Breast epithelium (tissue), 4 donors: ENCODE measurements at regions of chr16 and their contacts with region 1.

Region 1: GRCh38 chr16:27253526-27253930 is 15.0 kb downstream of the NSMCE1 start:
- DNase-seq: no peak
- H3K4me3 ChIP-seq: no peak overlapping the region
- H3K27ac ChIP-seq: peak overlapping the region; percentile 38 to 86
- H3K4me1 ChIP-seq: peaks cover 2 to 9% of the 10 kb centered on the region in 2 donors
- H3K27me3 ChIP-seq: no peaks in the 10 kb centered on the region
- CTCF ChIP-seq: no peak
- POLR2A ChIP-seq: no peak

Region 2: GRCh38 chr16:27235055-27235937 is 18.2 kb before region 1 on chr16:
- intact Hi-C with region 1: no loop called
- DNase-seq: peak; percentile 80 to 81
- H3K4me3 ChIP-seq: peak overlapping the region in 2 of 3 donors; percentile 1 to 34
- H3K27ac ChIP-seq: peak overlapping the region; percentile 78 to 88
- H3K4me1 ChIP-seq: peaks cover 7% of the 10 kb centered on the region in 2 donors
- H3K27me3 ChIP-seq: no peaks in the 10 kb centered on the region
- CTCF ChIP-seq: peak; percentile 28 to 77 (median 73)
- POLR2A ChIP-seq: no peak

Region 3: DNA sequence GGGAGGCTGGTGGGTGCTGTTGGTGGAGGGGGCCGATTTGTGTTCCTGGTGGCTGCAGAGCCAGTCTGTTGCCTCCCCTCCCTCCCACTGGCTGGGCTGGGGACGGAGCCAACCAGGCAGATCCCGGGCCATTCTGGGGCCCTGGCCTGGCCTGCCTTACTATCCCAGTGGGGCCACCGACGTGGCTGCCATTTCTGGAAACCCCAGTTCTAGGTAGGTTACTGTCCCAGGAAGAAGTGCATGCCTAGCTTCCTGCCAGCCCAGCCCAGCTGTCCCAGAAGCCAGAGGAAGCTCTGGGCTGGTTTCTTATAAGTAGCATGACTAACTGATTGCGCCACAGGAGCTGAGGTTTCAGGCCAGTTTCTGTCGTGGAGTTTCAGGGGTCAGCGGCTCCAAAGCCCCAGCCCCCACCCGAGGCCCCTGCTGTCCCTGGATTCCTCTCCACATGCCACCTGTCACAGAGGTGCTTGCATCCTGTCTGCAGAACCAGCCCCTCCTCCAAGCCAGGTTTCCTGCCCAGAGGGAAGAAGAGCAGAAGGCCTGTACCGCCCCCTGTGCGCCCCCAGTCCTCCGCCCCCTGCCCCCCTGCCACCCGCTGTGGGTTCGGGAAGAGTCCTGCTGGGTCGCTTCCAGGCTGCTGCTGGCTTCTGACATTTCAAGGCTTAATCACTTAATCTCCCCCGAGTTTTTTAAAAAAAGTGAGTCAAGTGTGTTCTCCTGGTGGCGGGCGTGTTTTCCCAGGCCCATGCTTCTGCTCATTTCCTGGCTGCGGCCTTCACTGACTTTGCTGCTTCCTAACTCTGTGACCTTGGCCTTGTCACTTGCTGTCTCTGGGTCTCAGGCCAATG is 73.4 kb after region 1 on chr16:
- intact Hi-C with region 1: loop called (anchors 10 kb)
- DNase-seq: peak; percentile 54 to 91
- H3K4me3 ChIP-seq: peak overlapping the region in 2 of 3 donors; percentile 8 to 42
- H3K27ac ChIP-seq: peak overlapping the region; percentile 97 to 98
- H3K4me1 ChIP-seq: peaks cover 9 to 18% of the 10 kb centered on the region in 2 donors
- H3K27me3 ChIP-seq: no peaks in the 10 kb centered on the region
- CTCF ChIP-seq: no peak
- POLR2A ChIP-seq: no peak